ENCODE measurements at regions of chr15 and their contacts with region 1.

Region 1: GRCh38 chr15:43285609-43286037 is 18.9 kb upstream of the TGM5 start:
- DNase-seq: peak; percentile 69 to 81 (median 72)
- ATAC-seq: peak; percentile 87
- H3K4me3 ChIP-seq: no peak overlapping the region
- H3K27ac ChIP-seq: no peak overlapping the region
- H3K4me1 ChIP-seq: no peaks in the 10 kb centered on the region; a peak in 1 of 5 replicates
- H3K27me3 ChIP-seq: peaks cover 25 to 38% of the 10 kb centered on the region in 2 experiments
- CTCF ChIP-seq: peak; percentile 81 to 97 (median 90)
- EP300 ChIP-seq: 0 out of 2 replicates have a peak, but pooled peaks have one; percentile 19
- POLR2A ChIP-seq: no peak
- RAD21 ChIP-seq: peak; percentile 91 to 99

Region 2: GRCh38 chr15:42704492-42704926 is 581.1 kb before region 1 on chr15:
- CTCF ChIA-PET with region 1: no interaction called
- POLR2A ChIA-PET with region 1: no interaction called
- in situ Hi-C with region 1: no loop called
- intact Hi-C with region 1: loop called (anchors 10 kb)
- DNase-seq: peak; percentile 69 to 82 (median 76)
- ATAC-seq: peak; percentile 100
- H3K4me3 ChIP-seq: no peak overlapping the region
- H3K27ac ChIP-seq: no peak overlapping the region
- H3K4me1 ChIP-seq: no peaks in the 10 kb centered on the region
- H3K27me3 ChIP-seq: no peaks in the 10 kb centered on the region
- CTCF ChIP-seq: peak; percentile 90 to 94 (median 90)
- EP300 ChIP-seq: no peak
- POLR2A ChIP-seq: no peak
- RAD21 ChIP-seq: peak; percentile 82 to 88

Region 3: GRCh38 chr15:42933886-42934667 is 351.5 kb before region 1 on chr15:
- CTCF ChIA-PET with region 1: no interaction called
- POLR2A ChIA-PET with region 1: no interaction called
- in situ Hi-C with region 1: no loop called
- intact Hi-C with region 1: loop called (anchors 5 kb)
- DNase-seq: no peak
- ATAC-seq: no peak
- H3K4me3 ChIP-seq: no peak overlapping the region
- H3K27ac ChIP-seq: no peak overlapping the region
- H3K4me1 ChIP-seq: no peaks in the 10 kb centered on the region
- H3K27me3 ChIP-seq: no peaks in the 10 kb centered on the region
- CTCF ChIP-seq: no peak
- EP300 ChIP-seq: no peak
- POLR2A ChIP-seq: no peak
- RAD21 ChIP-seq: no peak

Region 4: GRCh38 chr15:43185157-43186017 is 100.2 kb before region 1 on chr15 and contains the start of gene CCNDBP1:
- CTCF ChIA-PET with region 1: interaction called, 4 read pairs
- POLR2A ChIA-PET with region 1: no interaction called
- in situ Hi-C with region 1: no loop called
- intact Hi-C with region 1: loop called (anchors 2 kb)
- DNase-seq: peak; percentile 99
- ATAC-seq: peak; percentile 97
- H3K4me3 ChIP-seq: peak within 1 kb of the TSS; percentile 70
- H3K27ac ChIP-seq: peak within 1 kb of the TSS; percentile 83
- H3K4me1 ChIP-seq: peaks cover 12 to 15% of the 10 kb centered on the region in 2 experiments
- H3K27me3 ChIP-seq: no peaks in the 10 kb centered on the region
- CTCF ChIP-seq: peak; percentile 42 to 69 (median 45)
- EP300 ChIP-seq: peak; percentile 27; the same call in 1 of the 2 replicates
- POLR2A ChIP-seq: peak; percentile 89
- RAD21 ChIP-seq: 0 out of 4 replicates have a peak, but pooled peaks of 1 of the 2 experiments have one; percentile 6
- polyA plus RNA-seq, gene CCNDBP1: 37.0 to 44.7 TPM

Region 5: GRCh38 chr15:43225201-43225949 is 60.2 kb before region 1 on chr15:
- CTCF ChIA-PET with region 1: interaction called, 15 read pairs
- POLR2A ChIA-PET with region 1: interaction called, 4 read pairs
- in situ Hi-C with region 1: no loop called
- intact Hi-C with region 1: loop called (anchors 1 kb)
- DNase-seq: peak in 2 of 4 experiments; percentile 56 to 78
- ATAC-seq: peak; percentile 84
- H3K4me3 ChIP-seq: no peak overlapping the region
- H3K27ac ChIP-seq: no peak overlapping the region
- H3K4me1 ChIP-seq: peaks cover 14 to 27% of the 10 kb centered on the region in 2 experiments; a peak in 4 of 5 replicates
- H3K27me3 ChIP-seq: no peaks in the 10 kb centered on the region
- CTCF ChIP-seq: peak; percentile 70 to 82 (median 81)
- EP300 ChIP-seq: no peak
- POLR2A ChIP-seq: no peak
- RAD21 ChIP-seq: peak; percentile 81 to 95

Region 6: GRCh38 chr15:43253431-43254403 is 31.9 kb before region 1 on chr15:
- CTCF ChIA-PET with region 1: no interaction called
- POLR2A ChIA-PET with region 1: no interaction called
- in situ Hi-C with region 1: no loop called
- intact Hi-C with region 1: no loop called
- DNase-seq: no peak
- ATAC-seq: no peak
- H3K4me3 ChIP-seq: no peak overlapping the region
- H3K27ac ChIP-seq: no peak overlapping the region
- H3K4me1 ChIP-seq: peaks cover 7 to 14% of the 10 kb centered on the region in 2 experiments
- H3K27me3 ChIP-seq: peaks cover 0 to 18% of the 10 kb centered on the region in 2 experiments; a peak in 3 of 5 replicates
- CTCF ChIP-seq: no peak
- EP300 ChIP-seq: no peak
- POLR2A ChIP-seq: no peak
- RAD21 ChIP-seq: no peak

Region 7: GRCh38 chr15:43299411-43299810 is 13.8 kb after region 1 on chr15:
- CTCF ChIA-PET with region 1: no interaction called
- POLR2A ChIA-PET with region 1: no interaction called
- in situ Hi-C with region 1: no loop called
- intact Hi-C with region 1: no loop called
- DNase-seq: no peak
- ATAC-seq: no peak
- H3K4me3 ChIP-seq: no peak overlapping the region
- H3K27ac ChIP-seq: no peak overlapping the region
- H3K4me1 ChIP-seq: no peaks in the 10 kb centered on the region; a peak in 2 of 5 replicates
- H3K27me3 ChIP-seq: peaks cover under 1 to 2% of the 10 kb centered on the region in 2 experiments; a peak in 2 of 5 replicates
- CTCF ChIP-seq: no peak
- EP300 ChIP-seq: no peak
- POLR2A ChIP-seq: no peak
- RAD21 ChIP-seq: no peak

Region 8: DNA sequence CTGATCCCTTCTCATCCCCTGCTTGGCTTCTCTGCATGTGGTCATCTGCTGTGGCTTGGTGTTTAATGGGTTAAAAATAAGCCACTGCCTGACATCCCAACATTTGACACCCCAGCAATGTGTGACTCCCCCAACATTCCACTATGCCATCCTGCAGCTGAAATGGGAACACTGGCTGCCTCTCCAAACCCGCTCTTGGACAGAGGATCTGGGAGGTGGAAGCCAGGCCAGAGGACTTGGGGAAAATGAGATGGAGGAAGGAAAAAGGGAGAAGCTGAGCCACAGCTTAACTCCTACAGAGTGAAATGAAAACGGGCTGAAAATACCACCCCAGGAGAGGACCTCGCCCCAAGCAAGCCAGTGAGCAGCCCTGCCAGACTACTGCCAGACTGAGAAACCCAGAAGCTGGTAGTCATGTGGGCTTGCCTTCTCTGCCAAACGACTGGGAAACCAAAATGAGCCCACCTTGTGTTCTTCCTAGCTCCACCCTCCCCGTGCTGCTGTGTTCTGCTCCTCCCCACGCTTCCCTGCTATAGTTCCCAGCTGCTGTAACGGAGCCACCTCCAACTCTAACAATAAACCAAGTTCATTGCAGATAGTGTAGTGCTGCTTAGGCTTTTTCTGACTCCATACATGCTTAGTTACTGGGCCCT is 245.5 kb after region 1 on chr15:
- CTCF ChIA-PET with region 1: no interaction called
- POLR2A ChIA-PET with region 1: no interaction called
- in situ Hi-C with region 1: no loop called
- intact Hi-C with region 1: no loop called
- DNase-seq: no peak
- ATAC-seq: peak; percentile 42
- H3K4me3 ChIP-seq: no peak overlapping the region
- H3K27ac ChIP-seq: no peak overlapping the region
- H3K4me1 ChIP-seq: peaks cover 4 to 12% of the 10 kb centered on the region in 2 experiments; a peak in 3 of 5 replicates
- H3K27me3 ChIP-seq: no peaks in the 10 kb centered on the region
- CTCF ChIP-seq: no peak
- EP300 ChIP-seq: no peak
- POLR2A ChIP-seq: no peak
- RAD21 ChIP-seq: no peak